ENCODE measurements at regions of chr10 and their contacts with region 1.

Region 1: DNA sequence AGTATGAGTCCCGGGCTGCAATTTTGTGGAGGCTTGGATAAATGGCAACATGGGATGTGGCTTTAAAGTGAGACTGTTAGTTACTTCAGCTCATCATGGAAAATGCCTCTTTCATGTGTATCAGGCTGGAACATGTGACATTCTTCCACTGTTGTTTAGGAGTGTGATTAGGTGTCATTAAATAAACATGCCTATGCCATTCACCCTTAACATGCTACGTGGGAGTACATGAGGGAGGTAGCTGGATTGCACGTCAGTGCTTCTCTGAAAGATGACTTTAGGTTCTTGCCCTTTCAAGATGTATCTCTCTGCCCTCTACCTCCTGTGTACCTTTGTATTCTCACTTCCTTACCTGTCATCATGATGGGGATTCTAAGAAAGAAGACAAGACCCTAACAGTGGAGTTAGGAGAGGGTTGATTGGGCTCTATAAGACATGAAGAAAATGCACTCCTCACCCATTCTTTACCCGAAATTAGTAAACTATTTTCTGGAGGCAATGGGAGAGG is 8.9 kb downstream of the AKR1E2 start:
- DNase-seq: no peak
- H3K4me3 ChIP-seq: no peak overlapping the region
- H3K27ac ChIP-seq: no peak overlapping the region
- H3K4me1 ChIP-seq: peaks cover 0 to 11% (median 0%) of the 10 kb centered on the region in 4 donors
- H3K27me3 ChIP-seq: no peaks in the 10 kb centered on the region
- CTCF ChIP-seq: no peak
- EP300 ChIP-seq: no peak
- POLR2A ChIP-seq: no peak

Region 2: GRCh38 chr10:5033061-5033770 is 198.3 kb after region 1 on chr10:
- intact Hi-C with region 1: no loop called
- DNase-seq: no peak
- H3K4me3 ChIP-seq: no peak overlapping the region
- H3K27ac ChIP-seq: peak overlapping the region in 1 of 5 donors; percentile 33
- H3K4me1 ChIP-seq: peaks cover 0 to 8% (median 0%) of the 10 kb centered on the region in 4 donors
- H3K27me3 ChIP-seq: no peaks in the 10 kb centered on the region
- CTCF ChIP-seq: no peak
- EP300 ChIP-seq: no peak
- POLR2A ChIP-seq: no peak

Region 3: GRCh38 chr10:5297466-5297865 is 462.5 kb after region 1 on chr10:
- intact Hi-C with region 1: loop called (anchors 5 kb)
- DNase-seq: peak in 1 of 2 donors; percentile 33
- H3K4me3 ChIP-seq: no peak overlapping the region
- H3K27ac ChIP-seq: peak overlapping the region in 1 of 5 donors; percentile 42
- H3K4me1 ChIP-seq: peaks cover 0 to 10% (median 0%) of the 10 kb centered on the region in 4 donors
- H3K27me3 ChIP-seq: no peaks in the 10 kb centered on the region
- CTCF ChIP-seq: no peak
- EP300 ChIP-seq: no peak
- POLR2A ChIP-seq: no peak